Cardiac septum (tissue), 1 donor: ENCODE measurements at regions of chr19 and their contacts with region 1.

Region 1: DNA sequence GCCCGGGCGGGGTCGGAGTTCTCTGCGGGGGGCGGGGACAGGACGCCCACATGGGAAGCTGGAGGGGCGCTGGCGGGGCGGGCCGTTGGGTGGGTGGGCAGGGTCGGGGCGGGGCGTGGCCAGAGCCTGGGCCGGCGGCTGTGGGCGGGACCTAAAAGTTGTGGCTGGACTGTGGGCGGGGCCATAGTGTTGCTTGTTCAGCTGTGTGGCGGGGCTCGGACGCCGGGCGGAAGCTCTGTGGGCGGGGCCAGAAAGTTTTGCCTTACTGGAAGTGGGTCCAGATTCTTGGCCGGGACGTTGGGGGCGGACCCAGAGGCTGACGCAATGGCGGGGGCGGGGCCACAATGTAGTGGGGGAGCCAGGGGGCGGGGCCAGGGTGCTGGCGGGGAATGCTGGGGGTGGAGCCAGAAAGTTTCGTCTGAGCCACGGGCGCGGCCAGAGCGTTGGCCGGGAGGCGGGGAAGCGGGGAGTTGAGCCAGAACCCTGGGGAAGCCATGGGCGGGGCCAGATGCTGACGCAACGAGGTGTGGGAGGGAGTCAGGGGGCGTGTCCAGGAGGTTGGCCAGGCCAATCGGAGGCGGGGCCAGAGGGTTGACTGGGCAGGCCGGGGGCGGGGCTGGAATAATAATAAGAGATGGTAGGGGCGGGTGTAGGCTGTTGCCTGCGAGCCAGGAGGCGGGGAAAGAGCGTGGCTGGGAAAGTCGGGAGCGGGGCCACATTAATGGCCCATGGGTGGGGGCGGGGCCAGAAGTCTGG is 541 bp downstream of the CCDC9 start:
- DNase-seq: peak; percentile 100

Region 2: DNA sequence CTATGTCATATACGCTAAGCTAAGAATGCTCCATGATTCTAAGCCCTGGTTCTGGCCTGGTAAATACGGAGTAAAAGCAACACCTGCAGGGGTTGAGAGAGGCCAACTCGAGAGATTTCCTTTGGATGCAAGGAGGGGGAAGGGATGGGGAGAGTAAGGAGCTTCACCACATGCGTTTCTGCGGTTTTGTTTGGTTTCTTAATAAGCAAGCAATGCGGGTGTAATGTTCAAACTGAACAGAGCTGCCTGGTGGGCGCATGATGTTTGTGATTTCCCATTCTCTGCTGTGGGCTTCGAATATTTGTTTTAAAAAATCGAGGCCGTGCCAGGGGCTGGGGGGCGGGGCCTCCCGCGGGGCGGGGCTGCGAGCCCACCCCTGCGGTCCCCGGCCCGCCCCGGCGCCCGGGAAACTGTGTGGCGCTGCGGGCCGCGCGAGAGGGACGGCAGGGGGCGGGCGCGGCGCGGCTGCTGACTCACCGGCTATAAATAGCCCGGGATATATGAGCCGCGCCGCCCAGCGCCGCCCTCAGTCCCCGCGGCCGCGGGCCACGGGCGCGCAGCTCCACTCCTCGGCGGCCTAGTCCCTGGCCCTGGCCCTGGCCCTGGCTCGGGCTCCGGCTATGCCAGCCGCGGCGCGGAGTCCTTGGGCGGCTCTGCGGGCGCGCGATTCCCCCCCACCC is 31.0 kb before region 1 on chr19:
- intact Hi-C with region 1: loop called (anchors 2 kb)
- DNase-seq: peak; percentile 93

Region 3: GRCh38 chr19:47273978-47274890 is 17.4 kb after region 1 on chr19 and contains the start of gene INAFM1:
- intact Hi-C with region 1: loop called (anchors 1 kb)
- DNase-seq: peak; percentile 100
- total RNA-seq, gene INAFM1: 18.0 TPM